ENCODE measurements at regions of chr19 and their contacts with region 1.

Region 1: GRCh38 chr19:572140-572742 is at the start of gene BSG:
- DNase-seq: peak; percentile 100
- H3K4me3 Mint-ChIP-seq: peak within 1 kb of the TSS; percentile 90
- H3K27ac Mint-ChIP-seq: peak within 1 kb of the TSS; percentile 95
- H3K4me1 Mint-ChIP-seq: peaks cover 30% of the 10 kb centered on the region
- H3K27me3 Mint-ChIP-seq: no peaks in the 10 kb centered on the region
- total RNA-seq, gene BSG: 291 and 297 TPM in 2 replicates

Region 2: DNA sequence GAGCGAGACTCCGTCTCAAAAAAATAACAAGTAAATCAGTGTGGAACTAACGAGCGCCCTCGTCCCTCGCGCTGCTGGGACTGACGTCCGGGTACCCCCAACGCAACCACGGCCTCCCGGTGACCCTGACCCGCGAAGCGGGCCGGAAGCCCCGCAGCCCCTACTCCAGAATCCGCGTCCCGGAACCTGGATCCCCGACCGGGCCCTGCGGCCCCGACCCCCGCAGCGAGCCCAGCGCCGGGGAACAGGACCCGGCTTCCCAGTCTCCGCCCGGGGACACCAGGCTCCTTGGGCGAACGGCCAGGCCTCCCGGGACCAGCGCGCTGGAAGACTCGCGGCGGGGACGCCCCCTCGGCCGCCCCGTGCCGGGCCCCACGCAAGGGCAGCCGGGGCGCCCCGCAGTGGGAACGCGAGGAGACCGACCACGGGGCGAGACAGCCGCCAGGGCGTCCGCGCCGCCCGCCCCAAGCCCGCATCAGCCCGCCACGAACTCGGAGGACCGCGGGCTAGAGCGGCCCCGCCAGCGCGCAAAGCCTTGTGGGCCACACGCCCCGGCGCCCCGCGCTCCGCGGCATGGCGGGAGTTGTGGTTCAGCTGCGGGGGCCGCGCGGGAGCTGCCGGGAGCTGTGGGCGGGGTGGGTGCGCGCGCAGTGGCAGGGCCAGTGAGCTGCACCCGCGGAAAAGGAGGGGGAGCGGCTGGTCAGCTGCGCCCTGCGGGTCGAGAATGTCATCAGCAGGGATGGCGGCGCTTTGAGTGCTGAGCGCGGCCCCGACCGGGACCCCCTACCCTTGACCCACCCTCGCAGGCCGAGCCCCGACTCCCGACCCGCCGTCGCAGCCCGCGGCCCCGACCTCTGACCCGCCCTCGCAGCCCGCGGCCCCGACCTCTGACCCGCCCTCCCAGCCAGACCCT is 83.5 kb before region 1 on chr19:
- intact Hi-C with region 1: no loop called
- DNase-seq: peak; percentile 97
- H3K4me3 Mint-ChIP-seq: peak overlapping the region; percentile 86
- H3K27ac Mint-ChIP-seq: peak overlapping the region; percentile 94
- H3K4me1 Mint-ChIP-seq: peaks cover 7% of the 10 kb centered on the region
- H3K27me3 Mint-ChIP-seq: peaks cover 5% of the 10 kb centered on the region

Region 3: GRCh38 chr19:506404-507285 is 65.6 kb before region 1 on chr19:
- intact Hi-C with region 1: loop called (anchors 2 kb)
- DNase-seq: peak; percentile 98
- H3K4me3 Mint-ChIP-seq: peak overlapping the region; percentile 90
- H3K27ac Mint-ChIP-seq: peak overlapping the region; percentile 99
- H3K4me1 Mint-ChIP-seq: peaks cover 37% of the 10 kb centered on the region
- H3K27me3 Mint-ChIP-seq: peaks cover 1% of the 10 kb centered on the region

Region 4: DNA sequence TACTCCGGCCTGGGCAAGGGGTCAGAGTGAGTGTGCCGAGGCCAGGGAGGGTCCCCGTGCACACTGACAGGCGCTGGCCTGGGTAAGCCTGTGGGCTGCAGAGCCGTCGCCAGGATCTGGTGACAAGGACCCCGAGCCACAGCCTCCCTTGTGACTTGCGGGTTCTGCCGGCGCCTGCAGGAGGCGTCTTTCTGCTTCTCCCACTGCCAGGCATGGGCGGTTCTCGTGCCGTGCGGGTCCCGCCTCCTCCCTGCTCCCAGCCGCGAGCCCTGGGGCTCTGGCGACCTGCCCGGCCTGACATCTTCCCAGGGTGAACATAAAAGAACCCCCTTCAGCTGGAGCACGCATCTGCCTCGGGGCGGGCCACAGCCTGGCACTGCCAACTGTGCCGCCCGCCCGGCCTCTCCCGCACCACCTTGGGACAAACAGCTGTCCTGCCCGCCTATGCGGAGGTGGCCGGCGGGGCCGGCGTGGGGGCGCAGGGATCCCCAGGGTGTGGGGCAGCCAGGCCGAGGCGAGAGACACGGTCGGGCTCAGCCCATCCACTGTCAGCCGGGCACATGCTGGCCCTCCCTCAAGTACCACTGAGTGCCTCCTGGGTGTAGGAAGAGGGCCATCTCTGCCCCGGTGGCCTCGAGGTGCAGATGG is 16.0 kb after region 1 on chr19:
- intact Hi-C with region 1: loop called (anchors 2 kb)
- DNase-seq: peak; percentile 88
- H3K4me3 Mint-ChIP-seq: peak overlapping the region; percentile 28
- H3K27ac Mint-ChIP-seq: no peak overlapping the region
- H3K4me1 Mint-ChIP-seq: peaks cover 2% of the 10 kb centered on the region
- H3K27me3 Mint-ChIP-seq: peaks cover 13% of the 10 kb centered on the region

Region 5: GRCh38 chr19:633068-633785 is 61.0 kb after region 1 on chr19 and contains the start of gene POLRMT:
- intact Hi-C with region 1: loop called (anchors 1 kb)
- DNase-seq: peak; percentile 99
- H3K4me3 Mint-ChIP-seq: peak within 1 kb of the TSS; percentile 98
- H3K27ac Mint-ChIP-seq: peak within 1 kb of the TSS; percentile 97
- H3K4me1 Mint-ChIP-seq: peaks cover 17% of the 10 kb centered on the region
- H3K27me3 Mint-ChIP-seq: no peaks in the 10 kb centered on the region
- total RNA-seq, gene POLRMT: 103 and 104 TPM in 2 replicates

Region 6: GRCh38 chr19:680287-681028 is 108.2 kb after region 1 on chr19:
- intact Hi-C with region 1: loop called (anchors 1 kb)
- DNase-seq: peak; percentile 99
- H3K4me3 Mint-ChIP-seq: peak overlapping the region; percentile 88
- H3K27ac Mint-ChIP-seq: peak overlapping the region; percentile 99
- H3K4me1 Mint-ChIP-seq: peaks cover 4% of the 10 kb centered on the region
- H3K27me3 Mint-ChIP-seq: peaks cover 3% of the 10 kb centered on the region